ENCODE measurements at regions of chr10 and their contacts with region 1.

Region 1: GRCh38 chr10:60646966-60647796 is 131.1 kb upstream of the CDK1 start:
- DNase-seq: peak; percentile 17
- ATAC-seq: peak; percentile 78
- H3K4me3 ChIP-seq: no peak overlapping the region
- H3K27ac ChIP-seq: no peak overlapping the region
- H3K4me1 ChIP-seq: no peaks in the 10 kb centered on the region
- H3K27me3 ChIP-seq: no peaks in the 10 kb centered on the region
- CTCF ChIP-seq: peak; percentile 59 to 72 (median 59)
- EP300 ChIP-seq: no peak
- POLR2A ChIP-seq: no peak
- RAD21 ChIP-seq: peak; percentile 77

Region 2: DNA sequence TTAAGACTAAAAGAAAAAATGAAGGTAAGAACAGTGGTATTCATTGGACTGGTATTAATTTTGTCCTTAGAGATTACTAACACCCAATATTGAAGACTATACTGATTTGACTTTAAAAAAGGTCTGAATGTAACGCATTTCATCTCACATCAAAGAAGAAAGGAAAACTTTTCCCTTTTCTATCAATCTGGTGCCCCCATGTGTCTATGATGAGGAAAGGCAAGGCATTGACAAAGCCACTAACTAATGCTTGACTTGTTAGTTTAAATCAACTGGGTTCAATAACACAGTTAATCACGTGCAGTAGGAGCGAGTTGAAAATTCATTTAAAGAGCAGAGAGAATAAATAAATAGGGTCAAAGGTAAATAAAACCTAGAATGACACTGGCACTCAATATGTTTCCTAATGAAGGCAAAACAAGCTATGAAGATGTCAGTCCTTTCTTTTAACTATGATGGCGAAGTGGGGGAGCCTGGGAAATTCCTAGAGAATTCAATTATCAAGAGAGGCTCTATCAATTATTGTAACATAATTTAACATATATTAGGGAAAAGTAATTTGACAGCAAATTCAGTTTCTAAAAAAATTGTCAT is 438.4 kb before region 1 on chr10:
- CTCF ChIA-PET with region 1: interaction called, 4 read pairs
- POLR2A ChIA-PET with region 1: no interaction called
- RAD21 ChIA-PET with region 1: no interaction called
- SMC1A ChIA-PET with region 1: no interaction called
- in situ Hi-C with region 1: no loop called
- intact Hi-C with region 1: loop called (anchors 2 kb)
- DNase-seq: no peak
- ATAC-seq: peak; percentile 67
- H3K4me3 ChIP-seq: no peak overlapping the region
- H3K27ac ChIP-seq: no peak overlapping the region
- H3K4me1 ChIP-seq: no peaks in the 10 kb centered on the region
- H3K27me3 ChIP-seq: peaks cover 0 to 3% of the 10 kb centered on the region in 2 experiments; a peak in 1 of 4 replicates
- CTCF ChIP-seq: peak; percentile 63 to 68 (median 64); a peak in 5 of 6 replicates
- EP300 ChIP-seq: no peak
- POLR2A ChIP-seq: no peak
- RAD21 ChIP-seq: peak; percentile 86

Region 3: DNA sequence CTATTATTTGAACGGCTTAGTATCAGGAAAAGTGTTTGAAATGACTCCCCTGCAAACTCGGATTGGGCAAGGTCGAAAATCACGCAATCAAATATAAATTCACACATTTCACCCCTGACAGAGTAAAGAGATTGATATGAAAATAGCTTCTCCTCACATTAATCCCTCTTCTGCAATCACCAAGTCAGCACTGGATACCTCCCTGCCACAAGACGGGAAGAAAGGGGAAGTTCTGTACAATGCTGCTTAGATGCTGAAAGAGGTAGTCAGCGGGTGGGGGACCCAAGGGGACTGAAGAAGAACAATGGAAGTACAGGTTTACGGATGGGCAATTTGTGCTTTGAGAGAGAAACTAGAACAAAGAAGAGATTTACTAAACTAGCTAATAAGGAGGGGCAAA is 185.5 kb before region 1 on chr10:
- CTCF ChIA-PET with region 1: no interaction called
- POLR2A ChIA-PET with region 1: no interaction called
- RAD21 ChIA-PET with region 1: no interaction called
- SMC1A ChIA-PET with region 1: no interaction called
- in situ Hi-C with region 1: no loop called
- intact Hi-C with region 1: loop called (anchors 5 kb)
- DNase-seq: no peak
- ATAC-seq: peak; percentile 34; the same call in 1 of the 3 replicates
- H3K4me3 ChIP-seq: no peak overlapping the region
- H3K27ac ChIP-seq: no peak overlapping the region
- H3K4me1 ChIP-seq: no peaks in the 10 kb centered on the region
- H3K27me3 ChIP-seq: no peaks in the 10 kb centered on the region
- CTCF ChIP-seq: no peak
- EP300 ChIP-seq: no peak
- POLR2A ChIP-seq: no peak
- RAD21 ChIP-seq: no peak

Region 4: DNA sequence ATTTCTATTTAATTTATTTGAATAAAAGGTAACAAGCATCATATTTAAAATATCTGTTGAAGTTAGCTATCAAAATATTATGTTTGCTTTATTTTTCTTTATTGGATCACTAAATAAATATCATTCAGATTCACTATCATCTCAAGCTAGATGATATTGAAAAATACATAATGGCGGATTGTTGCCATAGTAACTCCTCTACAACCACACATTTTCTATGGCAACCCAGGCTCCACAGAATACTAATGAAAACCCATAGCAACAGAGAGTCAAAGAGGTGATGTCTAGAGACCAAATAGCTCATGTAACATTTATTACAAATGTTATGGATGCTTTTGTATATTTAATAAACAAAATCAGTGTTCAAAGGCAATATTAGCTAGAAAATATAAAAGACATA is 17.8 kb before region 1 on chr10:
- CTCF ChIA-PET with region 1: interaction called, 22 read pairs
- POLR2A ChIA-PET with region 1: no interaction called
- RAD21 ChIA-PET with region 1: interaction called, 4 read pairs
- SMC1A ChIA-PET with region 1: interaction called, 11 read pairs
- in situ Hi-C with region 1: no loop called
- intact Hi-C with region 1: no loop called
- DNase-seq: no peak
- ATAC-seq: no peak
- H3K4me3 ChIP-seq: no peak overlapping the region
- H3K27ac ChIP-seq: no peak overlapping the region
- H3K4me1 ChIP-seq: no peaks in the 10 kb centered on the region
- H3K27me3 ChIP-seq: no peaks in the 10 kb centered on the region
- CTCF ChIP-seq: no peak
- EP300 ChIP-seq: no peak
- POLR2A ChIP-seq: no peak
- RAD21 ChIP-seq: no peak